ENCODE measurements at regions of chr3 and their contacts with region 1.

Region 1: GRCh38 chr3:115525731-115526130 is 97.6 kb upstream of the GAP43 start:
- DNase-seq: no peak
- ATAC-seq: no peak

Region 2: DNA sequence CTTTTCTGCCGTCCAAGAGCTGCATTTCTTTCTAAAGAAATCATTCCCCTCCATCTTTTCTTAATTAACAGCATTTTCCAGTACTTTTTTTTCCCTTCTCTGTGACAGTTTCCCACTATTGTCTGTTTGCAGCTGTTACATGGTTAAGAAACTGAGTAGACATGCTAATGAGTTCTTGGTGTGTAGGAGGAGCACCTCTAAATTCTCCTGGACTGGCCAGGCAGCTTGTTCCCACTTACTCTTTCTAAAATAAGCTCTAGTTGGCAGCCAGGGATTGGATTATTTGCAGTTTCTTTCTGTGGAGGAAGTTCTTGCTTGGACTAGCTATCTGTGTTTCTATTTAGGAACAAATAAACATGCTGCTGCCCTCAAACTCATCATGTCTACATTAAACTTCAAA is 137.6 kb before region 1 on chr3:
- intact Hi-C with region 1: loop called (anchors 2 kb)
- DNase-seq: no peak
- ATAC-seq: peak; percentile 84

Region 3: DNA sequence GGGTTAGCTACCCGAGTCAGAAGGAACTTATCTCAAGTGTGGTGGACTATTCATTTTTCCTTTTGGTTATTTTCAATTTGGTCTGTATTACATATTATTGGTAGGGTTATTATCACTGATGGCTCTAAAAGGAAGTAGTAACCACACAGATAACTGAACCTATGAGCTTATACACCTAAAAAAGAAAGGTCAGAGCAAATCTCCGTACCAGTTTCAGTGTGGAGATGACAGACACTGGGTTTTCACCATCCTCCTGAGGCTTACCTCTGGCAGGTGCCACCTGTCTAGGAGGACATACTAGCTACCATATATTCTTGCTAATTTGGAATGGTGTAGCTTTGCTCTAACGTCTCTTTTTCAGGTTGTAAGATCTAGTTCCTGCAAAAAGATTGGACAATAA is 107.7 kb after region 1 on chr3:
- intact Hi-C with region 1: no loop called
- DNase-seq: no peak
- ATAC-seq: no peak

Measured in Right ventricle myocardium inferior (tissue), 1 donor.